ENCODE measurements at regions of chr2 and their contacts with region 1.

Region 1: GRCh38 chr2:152466980-152467676 is 132.2 kb downstream of the FMNL2 start:
- DNase-seq: peak; percentile 47
- ATAC-seq: peak; percentile 86
- H3K4me3 ChIP-seq: peak overlapping the region in 2 of 5 experiments; percentile 5 to 10
- H3K4me3 Mint-ChIP-seq: peak overlapping the region; percentile 69
- H3K27ac ChIP-seq: peak overlapping the region in 1 of 2 donors; percentile 31
- H3K27ac Mint-ChIP-seq: peak overlapping the region; percentile 85
- H3K4me1 ChIP-seq: peaks cover 28 to 39% of the 10 kb centered on the region in 2 donors
- H3K4me1 Mint-ChIP-seq: peaks cover 53% of the 10 kb centered on the region
- H3K27me3 ChIP-seq: no peaks in the 10 kb centered on the region
- H3K27me3 Mint-ChIP-seq: no peaks in the 10 kb centered on the region
- CTCF ChIP-seq: no peak

Region 2: GRCh38 chr2:152335010-152335725 is 132.0 kb before region 1 on chr2 and contains the start of gene FMNL2:
- CTCF ChIA-PET with region 1: no interaction called
- POLR2A ChIA-PET with region 1: interaction called, 3 read pairs
- intact Hi-C with region 1: loop called (anchors 2 kb)
- DNase-seq: peak; percentile 75
- ATAC-seq: peak; percentile 88
- H3K4me3 ChIP-seq: peak within 1 kb of the TSS; percentile 51 to 78 (median 64)
- H3K4me3 Mint-ChIP-seq: peak within 1 kb of the TSS; percentile 93
- H3K27ac ChIP-seq: no peak within 1 kb of the TSS
- H3K27ac Mint-ChIP-seq: peak within 1 kb of the TSS; percentile 79
- H3K4me1 ChIP-seq: peaks cover 10 to 12% of the 10 kb centered on the region in 2 donors
- H3K4me1 Mint-ChIP-seq: peaks cover 17% of the 10 kb centered on the region
- H3K27me3 ChIP-seq: peaks cover 0 to 16% (median 5%) of the 10 kb centered on the region in 4 experiments
- H3K27me3 Mint-ChIP-seq: peaks cover 13% of the 10 kb centered on the region
- CTCF ChIP-seq: no peak
- total RNA-seq, gene FMNL2: 8.4 and 8.8 TPM in 2 replicates

Region 3: GRCh38 chr2:152407204-152407721 is 59.9 kb before region 1 on chr2:
- CTCF ChIA-PET with region 1: interaction called, 5 read pairs
- POLR2A ChIA-PET with region 1: no interaction called
- intact Hi-C with region 1: loop called (anchors 10 kb)
- DNase-seq: peak; percentile 61
- ATAC-seq: peak; percentile 81
- H3K4me3 ChIP-seq: peak overlapping the region in 3 of 5 experiments; percentile 8 to 49 (median 26)
- H3K4me3 Mint-ChIP-seq: peak overlapping the region; percentile 61
- H3K27ac ChIP-seq: peak overlapping the region in 1 of 2 donors; percentile 54
- H3K27ac Mint-ChIP-seq: peak overlapping the region; percentile 59
- H3K4me1 ChIP-seq: peaks cover 17% of the 10 kb centered on the region in 2 donors
- H3K4me1 Mint-ChIP-seq: peaks cover 25% of the 10 kb centered on the region
- H3K27me3 ChIP-seq: no peaks in the 10 kb centered on the region
- H3K27me3 Mint-ChIP-seq: no peaks in the 10 kb centered on the region
- CTCF ChIP-seq: no peak

Region 4: DNA sequence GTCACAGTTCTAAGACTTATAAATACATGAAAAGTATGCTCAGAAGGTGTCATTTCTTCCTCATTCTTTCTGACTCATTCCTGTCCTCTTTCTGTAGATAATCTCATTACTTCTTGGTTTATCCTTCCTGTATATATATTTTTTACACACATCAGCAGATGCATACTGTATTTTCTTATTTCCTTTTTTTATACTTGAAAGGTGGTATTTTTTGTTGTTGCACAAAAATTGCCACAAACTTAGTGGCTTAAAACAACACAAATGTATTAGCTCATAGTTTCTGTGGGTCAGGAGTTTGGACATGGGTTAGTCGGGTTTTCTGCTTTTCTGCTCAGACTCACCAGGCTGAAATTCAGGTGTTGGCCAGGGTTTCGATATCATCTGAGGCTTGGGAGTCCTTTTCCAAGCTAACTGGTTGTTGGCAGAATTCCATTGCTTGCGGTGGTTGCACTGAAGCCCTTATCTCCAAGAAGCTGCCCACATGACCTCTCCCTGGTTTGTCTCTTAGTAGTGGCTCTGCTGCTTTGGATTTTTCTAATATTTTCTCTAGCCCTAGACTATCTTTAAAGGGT is 30.4 kb after region 1 on chr2:
- CTCF ChIA-PET with region 1: no interaction called
- POLR2A ChIA-PET with region 1: no interaction called
- intact Hi-C with region 1: loop called (anchors 2 kb)
- DNase-seq: no peak
- ATAC-seq: no peak
- H3K4me3 ChIP-seq: no peak overlapping the region
- H3K4me3 Mint-ChIP-seq: no peak overlapping the region
- H3K27ac ChIP-seq: no peak overlapping the region
- H3K27ac Mint-ChIP-seq: peak overlapping the region; percentile 46
- H3K4me1 ChIP-seq: peaks cover 4 to 10% of the 10 kb centered on the region in 2 donors
- H3K4me1 Mint-ChIP-seq: peaks cover 45% of the 10 kb centered on the region
- H3K27me3 ChIP-seq: no peaks in the 10 kb centered on the region
- H3K27me3 Mint-ChIP-seq: no peaks in the 10 kb centered on the region
- CTCF ChIP-seq: no peak